Mucosa of descending colon (tissue), 3 donors: ENCODE measurements at regions of chr16 and their contacts with region 1.

Region 1: GRCh38 chr16:57720142-57720575 is 15.4 kb upstream of the KATNB1 start:
- DNase-seq: peak in 2 of 3 donors; percentile 75 to 79
- ATAC-seq: peak; percentile 77
- H3K4me3 ChIP-seq: no peak overlapping the region
- H3K4me1 ChIP-seq: no peaks in the 10 kb centered on the region
- CTCF ChIP-seq: no peak

Region 2: GRCh38 chr16:57462209-57462977 is 257.8 kb before region 1 on chr16 and contains the start of gene POLR2C:
- intact Hi-C with region 1: no loop called
- DNase-seq: peak; percentile 92 to 94 (median 93)
- ATAC-seq: peak; percentile 100
- H3K4me3 ChIP-seq: peak within 1 kb of the TSS; percentile 91
- H3K4me1 ChIP-seq: peaks cover 12% of the 10 kb centered on the region
- CTCF ChIP-seq: peak; percentile 97
- total RNA-seq, gene POLR2C: 50.0 to 51.3 (median 51.0) TPM

Region 3: GRCh38 chr16:57513371-57514102 is 206.6 kb before region 1 on chr16:
- intact Hi-C with region 1: no loop called
- DNase-seq: peak; percentile 52 to 71 (median 57)
- ATAC-seq: peak; percentile 80
- H3K4me3 ChIP-seq: no peak overlapping the region
- H3K4me1 ChIP-seq: no peaks in the 10 kb centered on the region
- CTCF ChIP-seq: no peak

Region 4: DNA sequence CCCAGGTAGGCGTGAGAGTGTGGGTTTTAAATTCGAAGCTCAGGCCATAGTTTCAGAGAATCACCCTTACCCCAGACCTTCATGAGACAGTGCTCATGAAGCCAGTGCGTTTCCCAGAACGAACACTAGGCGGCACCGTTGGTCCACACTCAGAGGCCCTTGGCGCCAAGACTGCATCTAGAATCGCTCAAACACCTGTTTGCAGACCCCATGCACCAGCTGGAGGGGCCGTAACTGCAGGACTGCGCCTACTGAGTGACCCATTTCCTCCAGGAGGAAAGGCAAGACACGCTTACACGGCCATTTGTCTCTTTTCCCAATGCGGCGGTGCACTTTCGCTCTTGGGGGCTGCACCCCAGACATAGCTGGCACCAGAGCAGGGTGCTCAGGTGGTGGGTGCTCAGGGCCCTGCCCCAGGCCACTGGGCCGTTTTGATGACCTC is 143.7 kb before region 1 on chr16:
- intact Hi-C with region 1: loop called in 1 of 2 experiments (anchors 10 kb)
- DNase-seq: peak in 2 of 3 donors; percentile 85 to 91
- ATAC-seq: peak; percentile 86
- H3K4me3 ChIP-seq: no peak overlapping the region
- H3K4me1 ChIP-seq: no peaks in the 10 kb centered on the region
- CTCF ChIP-seq: peak; percentile 89

Region 5: GRCh38 chr16:57955572-57956188 is 235.5 kb after region 1 on chr16:
- intact Hi-C with region 1: no loop called
- DNase-seq: peak in 1 of 3 donors; percentile 7
- ATAC-seq: no peak
- H3K4me3 ChIP-seq: no peak overlapping the region
- H3K4me1 ChIP-seq: no peaks in the 10 kb centered on the region
- CTCF ChIP-seq: no peak